Right ventricle myocardium superior (tissue), 1 donor: ENCODE measurements at regions of chr11 and their contacts with region 1.

Region 1: DNA sequence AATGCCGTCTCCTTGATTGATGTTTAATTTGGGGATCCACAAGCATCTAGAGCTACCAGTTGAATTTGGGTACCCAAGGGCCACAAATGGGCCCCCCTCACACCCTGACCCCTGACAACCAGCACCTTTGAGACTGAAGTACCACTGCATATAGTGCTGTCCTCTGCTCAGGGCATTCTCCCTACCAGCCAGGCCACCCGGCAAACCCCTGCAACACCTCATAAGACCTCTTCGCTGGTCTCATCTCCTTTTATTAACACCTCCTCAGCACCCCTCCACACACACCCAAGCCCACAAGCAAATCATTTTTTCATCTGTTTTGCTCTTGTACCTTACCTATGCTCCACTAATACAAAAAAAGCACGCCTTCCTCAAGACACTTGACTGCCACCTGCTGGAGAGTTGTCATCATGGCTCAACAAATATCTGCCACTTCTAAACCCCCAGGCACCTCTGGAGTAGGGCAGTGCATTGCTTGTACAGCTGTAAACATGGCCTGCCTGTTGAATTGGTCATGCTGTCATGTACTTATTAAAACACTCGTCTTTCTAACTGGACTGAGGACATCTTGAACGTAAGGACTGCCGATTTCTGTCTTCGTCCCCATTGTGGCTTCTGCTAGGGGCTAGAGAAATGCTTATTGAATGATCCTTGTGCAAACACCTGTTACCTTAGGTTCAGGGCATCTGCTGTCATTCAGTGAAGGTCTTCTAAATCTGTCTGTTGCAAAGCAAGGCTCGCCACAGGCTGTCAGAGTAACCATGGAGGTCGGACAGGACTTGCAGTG is 66.5 kb downstream of the BMAL1 start:
- DNase-seq: peak; percentile 61
- ATAC-seq: peak; percentile 67

Region 2: DNA sequence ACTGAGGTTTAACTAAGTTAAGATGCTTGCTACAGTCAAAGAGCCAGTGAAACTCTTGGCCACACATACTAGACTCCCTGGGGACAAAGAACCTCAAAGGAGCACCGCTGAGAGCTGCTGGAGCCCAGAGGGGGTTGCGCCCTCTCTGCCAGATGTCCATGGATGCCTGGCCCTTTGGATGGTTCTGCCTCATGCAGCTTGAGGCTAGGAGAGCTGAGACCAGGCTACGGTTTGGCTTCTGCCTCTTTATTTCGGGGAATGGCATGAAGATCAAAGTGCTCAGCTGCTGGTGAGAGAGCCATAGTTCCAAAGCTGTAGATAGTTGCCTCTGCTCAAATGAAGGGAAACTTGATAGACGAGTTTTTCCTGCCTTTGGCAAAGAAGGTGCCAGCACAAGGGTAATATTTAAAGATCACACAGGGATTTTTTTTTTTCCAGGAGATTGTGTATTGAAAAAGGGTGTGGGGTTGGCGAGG is 292.0 kb before region 1 on chr11:
- intact Hi-C with region 1: no loop called
- DNase-seq: no peak
- ATAC-seq: no peak

Region 3: DNA sequence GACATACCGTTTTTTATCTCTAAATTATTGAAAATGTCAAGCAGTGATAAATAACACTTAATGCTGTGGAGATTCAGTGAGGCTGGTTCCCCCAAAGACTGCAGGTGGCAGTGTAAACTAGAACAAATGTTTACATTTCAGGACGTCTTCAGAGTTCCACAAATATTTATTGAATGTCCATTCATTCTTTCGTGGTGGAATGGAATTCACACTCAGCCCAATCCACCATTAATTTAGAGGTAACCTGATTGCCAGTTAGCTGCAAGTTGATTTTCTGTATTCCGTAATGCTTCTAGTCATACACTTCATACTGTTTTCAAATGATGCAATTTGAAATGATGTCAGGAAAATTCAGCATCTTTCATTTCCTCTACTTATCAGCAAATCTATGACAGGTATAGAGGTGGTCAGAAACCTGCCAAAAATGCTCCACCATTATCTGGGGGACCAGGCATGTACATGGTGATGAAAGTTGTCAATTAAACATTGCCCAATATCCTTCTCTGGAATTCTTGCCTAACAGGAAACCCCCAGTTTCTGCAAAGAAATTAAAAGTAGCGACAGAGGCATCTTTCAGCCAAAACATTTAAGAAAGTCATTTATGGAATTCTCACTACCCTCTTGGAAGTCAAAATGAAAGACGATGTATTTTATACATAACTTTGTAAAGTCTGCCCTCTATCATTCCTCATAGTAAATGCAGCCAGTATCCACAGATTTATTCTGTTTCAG is 160.9 kb before region 1 on chr11:
- intact Hi-C with region 1: no loop called
- DNase-seq: no peak
- ATAC-seq: peak; percentile 67

Region 4: GRCh38 chr11:13207665-13208594 is 136.2 kb before region 1 on chr11:
- intact Hi-C with region 1: loop called (anchors 2 kb)
- DNase-seq: peak; percentile 54
- ATAC-seq: peak; percentile 77